Natural killer cell (primary cell): ENCODE measurements at regions of chr11 and their contacts with region 1.

Region 1: DNA sequence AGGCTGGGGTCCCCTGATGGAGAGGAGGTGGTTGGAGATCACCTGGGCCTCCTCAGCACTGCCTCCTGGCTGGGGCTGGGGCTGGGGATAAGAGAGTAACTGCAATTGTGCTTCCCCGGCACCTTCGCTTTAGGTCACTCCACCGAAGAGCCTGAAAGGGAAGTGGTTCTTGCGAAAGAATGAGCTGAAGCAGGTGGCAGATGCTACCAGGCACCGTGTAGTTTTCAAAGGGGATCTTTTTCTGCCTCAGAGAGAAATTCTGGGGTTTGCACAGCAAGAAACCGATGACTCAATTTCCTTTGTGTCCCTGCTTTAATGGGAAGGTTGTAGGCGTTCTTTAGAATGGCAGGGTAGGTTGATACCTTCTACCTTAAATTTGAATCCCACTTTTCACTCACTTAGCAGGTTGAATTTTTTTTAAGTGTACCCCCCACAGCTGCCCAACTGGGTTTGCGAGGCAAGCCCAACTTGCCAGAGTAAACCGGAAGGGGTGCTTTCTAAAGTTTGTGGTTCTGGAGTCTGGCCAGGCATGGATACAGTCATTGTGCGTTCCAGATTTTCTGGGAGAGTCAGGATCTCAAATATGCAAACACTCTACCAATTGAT is 5.3 kb downstream of the CD44 start:
- DNase-seq: peak; percentile 46 to 86
- ATAC-seq: peak; percentile 49 to 71 (median 59)
- H3K4me3 ChIP-seq: peak overlapping the region; percentile 12
- H3K4me3 Mint-ChIP-seq: peak overlapping the region; percentile 83
- H3K27ac ChIP-seq: peak overlapping the region; percentile 80
- H3K27ac Mint-ChIP-seq: peak overlapping the region; percentile 86 to 88
- H3K4me1 ChIP-seq: peaks cover 80% of the 10 kb centered on the region
- H3K4me1 Mint-ChIP-seq: peaks cover 87 to 92% of the 10 kb centered on the region in 2 donors
- H3K27me3 ChIP-seq: no peaks in the 10 kb centered on the region
- H3K27me3 Mint-ChIP-seq: no peaks in the 10 kb centered on the region
- CTCF ChIP-seq: no peak

Region 2: GRCh38 chr11:35050541-35050995 is 93.7 kb before region 1 on chr11:
- intact Hi-C with region 1: loop called (anchors 1 kb)
- DNase-seq: peak; percentile 30 to 34
- ATAC-seq: peak; percentile 46 to 74 (median 73)
- H3K4me3 ChIP-seq: no peak overlapping the region
- H3K4me3 Mint-ChIP-seq: peak overlapping the region; percentile 85
- H3K27ac ChIP-seq: peak overlapping the region; percentile 82
- H3K27ac Mint-ChIP-seq: peak overlapping the region; percentile 96 to 98
- H3K4me1 ChIP-seq: peaks cover 49% of the 10 kb centered on the region
- H3K4me1 Mint-ChIP-seq: peaks cover 53 to 57% of the 10 kb centered on the region in 2 donors
- H3K27me3 ChIP-seq: no peaks in the 10 kb centered on the region
- H3K27me3 Mint-ChIP-seq: no peaks in the 10 kb centered on the region
- CTCF ChIP-seq: no peak

Region 3: DNA sequence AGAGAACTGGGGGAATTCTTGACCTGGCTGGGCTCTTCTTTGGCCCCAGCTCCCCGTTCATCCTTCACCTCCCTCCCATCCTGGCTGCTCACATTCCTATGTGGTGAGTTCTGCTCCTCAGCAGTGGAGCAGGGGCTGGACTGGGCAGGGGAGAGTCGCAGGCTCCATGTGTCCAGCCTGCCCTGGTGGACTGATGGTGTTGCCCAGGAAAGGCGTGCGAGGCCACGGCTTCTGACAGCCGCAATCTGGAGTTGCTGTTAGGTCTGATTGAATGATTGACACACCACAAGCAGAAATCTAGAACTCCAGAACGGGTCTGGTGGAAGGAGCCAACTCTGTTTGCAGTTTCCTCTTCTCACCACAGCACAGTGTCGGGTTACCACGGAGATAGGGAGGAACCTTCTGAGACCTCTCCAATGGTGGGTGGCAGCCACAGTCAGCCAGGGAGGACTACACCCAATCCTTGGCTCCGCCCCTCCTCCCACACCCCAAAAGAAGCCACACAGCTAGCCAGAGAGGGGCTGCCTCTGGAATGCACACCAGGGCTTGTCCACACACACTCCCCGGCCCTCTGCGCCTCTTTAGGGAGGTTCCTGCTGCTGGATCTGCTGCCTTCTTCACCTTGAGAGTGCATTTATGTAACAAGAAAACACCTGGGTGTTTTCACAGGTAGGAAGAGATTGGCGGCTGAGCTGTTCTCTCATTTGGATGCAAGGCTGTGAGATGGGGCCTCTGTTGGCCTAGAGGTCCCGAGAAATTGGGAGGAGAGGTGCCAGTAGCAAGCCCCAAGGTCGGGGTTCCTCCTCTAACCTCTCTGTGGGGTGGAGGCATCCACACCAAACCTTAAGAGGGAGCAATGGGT is 61.7 kb before region 1 on chr11:
- intact Hi-C with region 1: loop called (anchors 2 kb)
- DNase-seq: peak; percentile 69 to 95
- ATAC-seq: peak; percentile 62 to 88 (median 78)
- H3K4me3 ChIP-seq: peak overlapping the region; percentile 2
- H3K4me3 Mint-ChIP-seq: peak overlapping the region; percentile 76
- H3K27ac ChIP-seq: peak overlapping the region; percentile 96
- H3K27ac Mint-ChIP-seq: peak overlapping the region; percentile 87 to 94
- H3K4me1 ChIP-seq: peaks cover 65% of the 10 kb centered on the region
- H3K4me1 Mint-ChIP-seq: peaks cover 66 to 75% of the 10 kb centered on the region in 2 donors
- H3K27me3 ChIP-seq: no peaks in the 10 kb centered on the region
- H3K27me3 Mint-ChIP-seq: peaks cover 0 to 6% of the 10 kb centered on the region in 2 donors
- CTCF ChIP-seq: no peak

Region 4: GRCh38 chr11:35155677-35156076 is 11.4 kb after region 1 on chr11:
- intact Hi-C with region 1: no loop called
- DNase-seq: no peak
- ATAC-seq: no peak
- H3K4me3 ChIP-seq: no peak overlapping the region
- H3K4me3 Mint-ChIP-seq: no peak overlapping the region
- H3K27ac ChIP-seq: no peak overlapping the region
- H3K27ac Mint-ChIP-seq: peak overlapping the region in 1 of 2 donors; percentile 29
- H3K4me1 ChIP-seq: peaks cover 65% of the 10 kb centered on the region
- H3K4me1 Mint-ChIP-seq: peaks cover 84 to 90% of the 10 kb centered on the region in 2 donors
- H3K27me3 ChIP-seq: no peaks in the 10 kb centered on the region
- H3K27me3 Mint-ChIP-seq: no peaks in the 10 kb centered on the region
- CTCF ChIP-seq: no peak

Region 5: DNA sequence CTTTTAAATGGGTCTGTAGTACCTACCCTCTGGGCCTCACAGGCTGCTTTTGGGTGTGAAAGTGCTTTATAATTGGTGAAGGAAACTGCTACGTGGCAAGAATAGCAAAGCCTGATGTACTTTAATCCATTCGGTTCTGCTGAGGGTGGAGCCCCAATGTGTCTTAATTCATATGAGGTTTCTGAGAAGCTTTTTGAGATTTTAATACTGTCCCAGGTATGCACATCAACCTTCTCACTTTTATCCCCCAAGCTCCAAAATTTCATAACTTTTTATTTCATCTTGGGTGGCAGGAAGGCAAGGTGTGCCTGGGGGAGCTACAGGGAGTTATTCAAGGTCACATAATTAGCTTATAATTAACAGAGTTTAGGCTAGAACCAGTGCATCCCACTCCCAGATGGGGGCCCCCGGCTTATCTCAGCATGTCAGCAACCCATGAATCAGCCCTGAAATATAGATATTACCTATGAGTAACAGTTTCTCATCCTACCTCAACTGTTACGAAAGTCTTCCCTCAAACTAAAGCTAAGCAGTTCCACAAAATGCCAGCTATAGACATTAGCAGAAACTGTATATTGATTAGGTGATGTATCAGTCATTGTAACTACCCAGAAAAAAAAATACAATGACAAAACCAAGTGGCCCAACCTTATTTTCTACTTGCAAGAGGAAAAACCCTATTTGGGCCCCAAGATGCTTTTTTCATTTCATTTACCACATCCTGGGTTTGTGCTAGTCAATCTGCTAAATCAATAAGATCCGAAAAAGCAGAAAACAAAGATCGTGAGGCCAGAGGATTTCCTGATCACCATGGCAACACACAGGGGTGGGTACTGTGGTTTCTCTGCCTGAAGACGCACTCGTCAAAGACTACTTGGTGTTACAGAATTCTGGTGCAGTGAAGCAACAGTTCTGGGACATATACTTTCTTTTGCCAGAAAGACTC is 21.5 kb after region 1 on chr11:
- intact Hi-C with region 1: loop called (anchors 1 kb)
- DNase-seq: peak; percentile 85 to 98
- ATAC-seq: peak; percentile 69 to 89 (median 88)
- H3K4me3 ChIP-seq: peak overlapping the region; percentile 21
- H3K4me3 Mint-ChIP-seq: peak overlapping the region; percentile 90
- H3K27ac ChIP-seq: peak overlapping the region; percentile 99
- H3K27ac Mint-ChIP-seq: peak overlapping the region; percentile 90 to 99
- H3K4me1 ChIP-seq: peaks cover 68% of the 10 kb centered on the region
- H3K4me1 Mint-ChIP-seq: peaks cover 97% of the 10 kb centered on the region in 2 donors
- H3K27me3 ChIP-seq: no peaks in the 10 kb centered on the region
- H3K27me3 Mint-ChIP-seq: no peaks in the 10 kb centered on the region
- CTCF ChIP-seq: no peak

Region 6: DNA sequence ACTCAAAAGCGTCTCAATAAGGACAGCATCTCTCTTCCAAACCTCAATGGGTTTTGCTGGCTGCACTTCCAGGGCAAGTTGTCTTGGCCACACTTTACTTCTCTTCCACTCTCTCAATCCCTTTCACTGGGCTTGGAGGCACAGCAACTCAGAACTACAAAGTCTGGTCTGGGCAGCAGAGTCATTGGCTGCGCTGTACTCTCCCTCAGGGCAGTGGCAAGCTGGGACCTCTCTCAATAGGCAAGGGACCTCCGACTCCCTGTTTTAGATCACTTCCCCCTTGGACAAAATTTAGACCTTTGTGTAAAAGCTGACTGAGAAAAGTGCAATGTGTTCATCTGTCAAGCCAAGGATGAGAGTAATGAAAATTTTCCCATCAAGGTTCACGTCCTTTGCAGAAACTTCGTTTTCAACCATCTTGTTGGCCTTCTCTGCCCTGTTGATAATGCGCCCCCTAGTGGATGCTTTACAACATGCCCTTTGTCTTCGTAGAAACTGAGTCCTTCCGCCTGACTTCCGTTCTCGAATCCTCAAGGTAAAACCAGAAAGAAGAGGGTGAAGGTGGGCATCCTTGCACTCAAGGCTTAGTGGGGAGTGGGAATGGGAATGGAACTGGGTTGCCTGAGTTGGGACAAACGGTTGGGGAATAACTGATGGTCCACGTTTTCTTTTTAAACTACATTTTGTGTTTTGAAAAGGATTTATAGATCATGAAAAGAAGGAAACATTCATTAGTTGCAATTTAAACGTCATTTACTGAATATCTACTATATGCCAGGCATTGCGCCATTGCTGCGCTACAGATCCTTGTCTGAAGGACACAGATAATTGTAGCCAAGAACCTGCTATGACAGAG is 93.8 kb after region 1 on chr11:
- intact Hi-C with region 1: loop called (anchors 5 kb)
- DNase-seq: peak in 1 of 2 donors; percentile 86
- ATAC-seq: peak in 2 of 3 donors; percentile 56 to 58
- H3K4me3 ChIP-seq: no peak overlapping the region
- H3K4me3 Mint-ChIP-seq: no peak overlapping the region
- H3K27ac ChIP-seq: no peak overlapping the region
- H3K27ac Mint-ChIP-seq: no peak overlapping the region
- H3K4me1 ChIP-seq: peaks cover 30% of the 10 kb centered on the region
- H3K4me1 Mint-ChIP-seq: peaks cover 45 to 47% of the 10 kb centered on the region in 2 donors
- H3K27me3 ChIP-seq: no peaks in the 10 kb centered on the region
- H3K27me3 Mint-ChIP-seq: peaks cover 3 to 13% of the 10 kb centered on the region in 2 donors
- CTCF ChIP-seq: peak; percentile 87

Region 7: DNA sequence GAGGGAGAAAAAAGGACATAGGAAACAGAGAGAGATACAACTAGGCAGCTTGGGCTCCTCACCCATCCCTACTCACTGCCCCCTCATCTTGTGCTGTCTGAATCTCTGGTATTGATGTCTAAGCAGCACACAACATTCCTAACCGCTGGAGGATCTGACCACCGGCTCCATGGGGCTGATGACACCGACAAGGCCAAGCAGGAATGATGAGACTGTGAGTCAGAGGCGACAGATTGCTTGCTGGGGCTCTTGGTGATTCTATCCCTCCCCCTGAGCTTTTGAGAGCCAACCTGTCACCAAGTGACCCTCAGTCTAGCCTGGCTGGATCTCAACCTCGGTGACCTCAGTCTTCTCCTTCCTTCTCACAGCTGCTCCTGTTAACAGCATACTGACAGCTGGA is 367.4 kb after region 1 on chr11:
- intact Hi-C with region 1: no loop called
- DNase-seq: no peak
- ATAC-seq: no peak
- H3K4me3 ChIP-seq: no peak overlapping the region
- H3K4me3 Mint-ChIP-seq: no peak overlapping the region
- H3K27ac ChIP-seq: no peak overlapping the region
- H3K27ac Mint-ChIP-seq: no peak overlapping the region
- H3K4me1 ChIP-seq: no peaks in the 10 kb centered on the region
- H3K4me1 Mint-ChIP-seq: no peaks in the 10 kb centered on the region
- H3K27me3 ChIP-seq: peaks cover 5% of the 10 kb centered on the region
- H3K27me3 Mint-ChIP-seq: peaks cover 4 to 44% of the 10 kb centered on the region in 2 donors
- CTCF ChIP-seq: no peak